Naive thymus-derived CD4-positive, alpha-beta T cell (primary cell): ENCODE measurements at regions of chr2 and their contacts with region 1.

Region 1: GRCh38 chr2:157327621-157328500 is 2.2 kb upstream of the ERMN start:
- DNase-seq: peak; percentile 60 to 89 (median 81)
- ATAC-seq: peak; percentile 97
- H3K4me3 ChIP-seq: no peak overlapping the region
- H3K4me3 Mint-ChIP-seq: peak overlapping the region; percentile 47 to 81 (median 60)
- H3K27ac ChIP-seq: peak overlapping the region; percentile 19
- H3K27ac Mint-ChIP-seq: peak overlapping the region; percentile 18 to 96 (median 85)
- H3K4me1 ChIP-seq: peaks cover 23 to 46% of the 10 kb centered on the region in 2 donors
- H3K4me1 Mint-ChIP-seq: peaks cover 36 to 65% (median 58%) of the 10 kb centered on the region in 7 donors
- H3K27me3 ChIP-seq: no peaks in the 10 kb centered on the region
- H3K27me3 Mint-ChIP-seq: no peaks in the 10 kb centered on the region

Region 2: GRCh38 chr2:156803248-156803647 is 524.6 kb before region 1 on chr2:
- CTCF ChIA-PET with region 1: no interaction called
- POLR2A ChIA-PET with region 1: no interaction called
- intact Hi-C with region 1: no loop called
- DNase-seq: no peak
- ATAC-seq: no peak
- H3K4me3 ChIP-seq: no peak overlapping the region
- H3K4me3 Mint-ChIP-seq: no peak overlapping the region
- H3K27ac ChIP-seq: no peak overlapping the region
- H3K27ac Mint-ChIP-seq: no peak overlapping the region
- H3K4me1 ChIP-seq: no peaks in the 10 kb centered on the region
- H3K4me1 Mint-ChIP-seq: peaks cover 0 to 3% (median 0%) of the 10 kb centered on the region in 7 donors
- H3K27me3 ChIP-seq: no peaks in the 10 kb centered on the region
- H3K27me3 Mint-ChIP-seq: peaks cover 0 to 14% (median 0%) of the 10 kb centered on the region in 5 donors

Region 3: DNA sequence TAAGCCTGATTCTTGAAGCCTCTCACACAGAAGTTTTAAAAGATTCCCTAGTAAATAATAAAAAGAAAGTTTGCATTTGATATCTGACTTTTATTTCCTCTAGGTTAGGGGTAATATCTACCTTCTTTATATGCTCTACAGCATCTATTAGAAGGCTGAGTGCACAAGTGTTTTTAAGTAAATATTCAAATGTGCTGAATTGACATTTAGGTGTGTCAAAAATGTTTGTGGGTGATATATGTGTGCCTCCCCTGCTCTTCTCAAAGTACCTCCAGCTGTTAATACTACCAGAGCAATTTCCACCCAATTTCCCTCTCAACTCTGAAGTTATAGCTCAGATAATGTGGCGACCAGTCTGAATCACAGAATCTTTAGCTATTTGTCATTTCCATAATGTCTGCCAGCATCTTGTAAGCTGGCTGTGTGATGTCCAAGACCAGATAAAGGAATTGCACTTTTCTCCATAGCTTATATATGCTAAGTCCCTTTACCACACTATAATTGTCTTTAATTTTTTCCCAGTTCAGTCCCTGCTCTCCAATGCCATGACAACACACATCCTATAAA is 22.2 kb after region 1 on chr2:
- CTCF ChIA-PET with region 1: interaction called, 11 read pairs
- POLR2A ChIA-PET with region 1: interaction called, 4 read pairs
- intact Hi-C with region 1: no loop called
- DNase-seq: no peak
- ATAC-seq: no peak
- H3K4me3 ChIP-seq: no peak overlapping the region
- H3K4me3 Mint-ChIP-seq: peak overlapping the region in 1 of 10 donors; percentile 14
- H3K27ac ChIP-seq: no peak overlapping the region
- H3K27ac Mint-ChIP-seq: peak overlapping the region in 4 of 9 donors; percentile 31 to 77 (median 46)
- H3K4me1 ChIP-seq: peaks cover 0 to 25% of the 10 kb centered on the region in 2 donors
- H3K4me1 Mint-ChIP-seq: peaks cover 0 to 81% (median 65%) of the 10 kb centered on the region in 7 donors
- H3K27me3 ChIP-seq: no peaks in the 10 kb centered on the region
- H3K27me3 Mint-ChIP-seq: no peaks in the 10 kb centered on the region

Region 4: GRCh38 chr2:157413326-157414035 is 85.6 kb after region 1 on chr2:
- CTCF ChIA-PET with region 1: interaction called, 8 read pairs
- POLR2A ChIA-PET with region 1: interaction called, 554 read pairs
- intact Hi-C with region 1: loop called (anchors 1 kb)
- DNase-seq: peak in 7 of 9 donors; percentile 71 to 94 (median 88)
- ATAC-seq: peak; percentile 86
- H3K4me3 ChIP-seq: peak overlapping the region; percentile 22
- H3K4me3 Mint-ChIP-seq: peak overlapping the region; percentile 45 to 85 (median 68)
- H3K27ac ChIP-seq: peak overlapping the region; percentile 86
- H3K27ac Mint-ChIP-seq: peak overlapping the region; percentile 92 to 98 (median 95)
- H3K4me1 ChIP-seq: peaks cover 84 to 89% of the 10 kb centered on the region in 2 donors
- H3K4me1 Mint-ChIP-seq: peaks cover 58 to 97% (median 93%) of the 10 kb centered on the region in 7 donors
- H3K27me3 ChIP-seq: no peaks in the 10 kb centered on the region
- H3K27me3 Mint-ChIP-seq: no peaks in the 10 kb centered on the region

Region 5: DNA sequence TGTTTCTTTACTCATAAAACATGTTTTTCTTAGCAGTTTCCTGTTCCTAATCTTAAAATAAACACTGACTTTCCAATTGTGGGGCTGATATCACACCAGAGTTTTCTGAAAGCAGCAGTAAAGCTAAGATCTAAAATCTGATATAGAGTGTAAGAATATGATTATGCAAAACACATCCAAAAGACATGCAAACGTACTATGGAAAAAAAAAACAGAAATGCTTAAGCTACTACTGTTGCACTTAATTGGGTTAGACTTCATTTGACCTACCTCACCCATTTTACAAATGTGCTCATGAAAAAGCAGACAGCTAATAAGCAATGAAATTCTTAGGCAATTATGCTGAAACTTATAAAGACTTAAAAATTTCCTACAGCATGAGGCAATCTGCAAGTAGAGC is 105.5 kb after region 1 on chr2:
- CTCF ChIA-PET with region 1: interaction called, 80 read pairs
- POLR2A ChIA-PET with region 1: interaction called, 554 read pairs
- intact Hi-C with region 1: loop called in 1 of 2 experiments (anchors 1 kb)
- DNase-seq: peak in 2 of 9 donors; percentile 40 to 60
- ATAC-seq: peak; percentile 7
- H3K4me3 ChIP-seq: peak overlapping the region; percentile 60
- H3K4me3 Mint-ChIP-seq: peak overlapping the region; percentile 87 to 100 (median 97)
- H3K27ac ChIP-seq: peak overlapping the region; percentile 89
- H3K27ac Mint-ChIP-seq: peak overlapping the region; percentile 86 to 99 (median 96)
- H3K4me1 ChIP-seq: peaks cover 54 to 62% of the 10 kb centered on the region in 2 donors
- H3K4me1 Mint-ChIP-seq: peaks cover 61 to 89% (median 73%) of the 10 kb centered on the region in 7 donors
- H3K27me3 ChIP-seq: no peaks in the 10 kb centered on the region
- H3K27me3 Mint-ChIP-seq: no peaks in the 10 kb centered on the region

Region 6: GRCh38 chr2:157492189-157492773 is 164.4 kb after region 1 on chr2:
- CTCF ChIA-PET with region 1: interaction called, 53 read pairs
- POLR2A ChIA-PET with region 1: interaction called, 11 read pairs
- intact Hi-C with region 1: loop called (anchors 1 kb)
- DNase-seq: peak; percentile 41 to 79 (median 68)
- ATAC-seq: peak; percentile 91
- H3K4me3 ChIP-seq: no peak overlapping the region
- H3K4me3 Mint-ChIP-seq: peak overlapping the region in 6 of 10 donors; percentile 1 to 39 (median 14)
- H3K27ac ChIP-seq: no peak overlapping the region
- H3K27ac Mint-ChIP-seq: peak overlapping the region in 3 of 9 donors; percentile 9 to 19 (median 13)
- H3K4me1 ChIP-seq: peaks cover 0 to 21% of the 10 kb centered on the region in 2 donors
- H3K4me1 Mint-ChIP-seq: peaks cover 10 to 67% (median 59%) of the 10 kb centered on the region in 7 donors
- H3K27me3 ChIP-seq: no peaks in the 10 kb centered on the region
- H3K27me3 Mint-ChIP-seq: no peaks in the 10 kb centered on the region